ENCODE measurements at regions of chr9 and their contacts with region 1.

Region 1: DNA sequence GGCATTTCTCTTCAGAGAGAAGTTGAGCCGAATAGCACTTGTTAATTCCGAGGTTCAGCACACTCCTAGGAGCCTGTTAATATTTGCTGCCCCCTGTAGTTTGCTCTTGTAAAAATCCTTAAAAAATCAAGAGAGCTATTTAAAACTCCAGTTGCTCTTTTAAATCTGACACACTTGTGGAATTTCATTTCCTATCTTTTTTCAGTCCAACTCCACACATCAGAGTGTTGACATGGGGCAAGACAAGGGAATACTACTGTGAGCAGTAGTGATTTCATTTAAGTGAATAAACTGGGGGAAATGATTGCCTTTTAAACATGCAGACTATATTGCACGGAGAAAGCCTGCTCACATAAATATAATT is 1096.3 kb upstream of the DMAC1 start:
- DNase-seq: peak; percentile 47
- H3K4me3 Mint-ChIP-seq: no peak overlapping the region
- H3K27ac Mint-ChIP-seq: no peak overlapping the region
- H3K4me1 Mint-ChIP-seq: peaks cover 10% of the 10 kb centered on the region
- H3K27me3 Mint-ChIP-seq: no peaks in the 10 kb centered on the region
- CTCF ChIP-seq: peak; percentile 46

Region 2: GRCh38 chr9:7402334-7403027 is 1493.4 kb before region 1 on chr9:
- CTCF ChIA-PET with region 1: interaction called, 3 read pairs
- POLR2A ChIA-PET with region 1: no interaction called
- intact Hi-C with region 1: loop called (anchors 5 kb)
- DNase-seq: no peak
- H3K4me3 Mint-ChIP-seq: no peak overlapping the region
- H3K27ac Mint-ChIP-seq: no peak overlapping the region
- H3K4me1 Mint-ChIP-seq: peaks cover 11% of the 10 kb centered on the region
- H3K27me3 Mint-ChIP-seq: no peaks in the 10 kb centered on the region
- CTCF ChIP-seq: no peak

Region 3: GRCh38 chr9:7844242-7844641 is 1051.6 kb before region 1 on chr9:
- CTCF ChIA-PET with region 1: interaction called, 3 read pairs
- POLR2A ChIA-PET with region 1: no interaction called
- intact Hi-C with region 1: loop called (anchors 5 kb)
- DNase-seq: peak; percentile 27
- H3K4me3 Mint-ChIP-seq: no peak overlapping the region
- H3K27ac Mint-ChIP-seq: no peak overlapping the region
- H3K4me1 Mint-ChIP-seq: no peaks in the 10 kb centered on the region
- H3K27me3 Mint-ChIP-seq: no peaks in the 10 kb centered on the region
- CTCF ChIP-seq: peak; percentile 21

Region 4: DNA sequence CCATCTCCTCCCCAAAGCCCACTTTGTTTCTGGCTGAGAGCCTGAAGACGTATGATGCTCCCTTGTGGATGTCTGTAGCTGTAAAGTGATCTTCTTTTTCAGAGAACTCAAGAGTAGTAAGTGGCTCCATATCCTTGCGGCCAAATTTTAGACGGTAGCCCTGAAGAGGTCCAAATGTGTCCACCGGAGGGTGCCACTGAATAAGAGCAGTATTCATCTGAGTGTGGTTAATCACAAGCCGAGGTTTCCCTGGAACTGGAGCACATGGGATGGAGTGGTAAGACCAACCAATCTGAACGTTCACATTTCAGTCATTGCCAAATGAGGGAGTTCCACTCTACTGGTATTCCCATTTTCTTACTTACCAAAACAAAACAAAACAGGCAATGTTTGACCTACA is 409.7 kb before region 1 on chr9:
- CTCF ChIA-PET with region 1: no interaction called
- POLR2A ChIA-PET with region 1: no interaction called
- intact Hi-C with region 1: loop called (anchors 5 kb)
- DNase-seq: peak; percentile 32
- H3K4me3 Mint-ChIP-seq: no peak overlapping the region
- H3K27ac Mint-ChIP-seq: no peak overlapping the region
- H3K4me1 Mint-ChIP-seq: no peaks in the 10 kb centered on the region
- H3K27me3 Mint-ChIP-seq: no peaks in the 10 kb centered on the region
- CTCF ChIP-seq: no peak

Region 5: DNA sequence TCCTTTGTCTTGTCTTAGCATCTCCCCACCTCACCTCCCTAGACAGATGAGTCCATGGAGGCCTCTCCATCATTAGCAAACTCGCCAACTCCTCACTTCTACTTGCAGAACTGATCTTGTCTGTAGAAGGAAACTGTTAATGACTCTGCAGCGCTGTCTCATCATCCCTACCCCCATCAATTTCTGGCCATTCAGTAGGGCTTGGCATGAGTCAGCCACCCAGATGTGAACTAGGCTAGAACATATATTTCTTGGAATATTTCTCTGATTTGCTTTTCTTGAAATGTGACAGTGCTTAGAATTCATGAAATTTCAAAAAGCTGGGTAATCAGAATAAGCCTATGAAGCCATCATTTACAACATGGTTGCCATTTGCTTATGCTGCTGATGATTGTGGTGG is 28.7 kb after region 1 on chr9:
- CTCF ChIA-PET with region 1: no interaction called
- POLR2A ChIA-PET with region 1: no interaction called
- intact Hi-C with region 1: no loop called
- DNase-seq: peak; percentile 28
- H3K4me3 Mint-ChIP-seq: no peak overlapping the region
- H3K27ac Mint-ChIP-seq: no peak overlapping the region
- H3K4me1 Mint-ChIP-seq: no peaks in the 10 kb centered on the region
- H3K27me3 Mint-ChIP-seq: no peaks in the 10 kb centered on the region
- CTCF ChIP-seq: no peak

Region 6: GRCh38 chr9:9002826-9003583 is 107.2 kb after region 1 on chr9:
- CTCF ChIA-PET with region 1: interaction called, 3 read pairs
- POLR2A ChIA-PET with region 1: no interaction called
- intact Hi-C with region 1: loop called (anchors 5 kb)
- DNase-seq: peak; percentile 13
- H3K4me3 Mint-ChIP-seq: no peak overlapping the region
- H3K27ac Mint-ChIP-seq: no peak overlapping the region
- H3K4me1 Mint-ChIP-seq: no peaks in the 10 kb centered on the region
- H3K27me3 Mint-ChIP-seq: no peaks in the 10 kb centered on the region
- CTCF ChIP-seq: peak; percentile 26

Region 7: DNA sequence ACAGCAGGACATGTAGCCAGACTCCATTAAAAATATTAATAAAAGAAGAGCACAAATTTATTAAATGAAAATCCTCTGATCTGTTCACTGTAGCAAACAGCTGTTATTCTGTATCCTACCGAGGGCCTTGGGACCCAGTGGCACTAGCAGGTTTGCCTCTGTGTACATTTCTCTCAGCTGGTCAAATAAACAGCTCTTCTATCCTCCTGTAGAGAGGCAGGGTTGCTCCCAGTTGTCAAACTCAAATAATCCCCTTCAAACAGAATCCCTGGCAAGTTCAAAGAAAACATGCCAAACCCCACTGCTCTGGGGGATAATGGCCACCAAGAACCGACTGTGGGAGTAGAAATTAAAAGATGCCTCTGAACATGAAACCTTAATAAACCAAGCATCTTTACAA is 165.8 kb after region 1 on chr9:
- CTCF ChIA-PET with region 1: no interaction called
- POLR2A ChIA-PET with region 1: no interaction called
- intact Hi-C with region 1: no loop called
- DNase-seq: no peak
- H3K4me3 Mint-ChIP-seq: no peak overlapping the region
- H3K27ac Mint-ChIP-seq: no peak overlapping the region
- H3K4me1 Mint-ChIP-seq: no peaks in the 10 kb centered on the region
- H3K27me3 Mint-ChIP-seq: no peaks in the 10 kb centered on the region
- CTCF ChIP-seq: no peak